CD14-positive monocyte (primary cell): ENCODE measurements at regions of chr18 and their contacts with region 1.

Region 1: DNA sequence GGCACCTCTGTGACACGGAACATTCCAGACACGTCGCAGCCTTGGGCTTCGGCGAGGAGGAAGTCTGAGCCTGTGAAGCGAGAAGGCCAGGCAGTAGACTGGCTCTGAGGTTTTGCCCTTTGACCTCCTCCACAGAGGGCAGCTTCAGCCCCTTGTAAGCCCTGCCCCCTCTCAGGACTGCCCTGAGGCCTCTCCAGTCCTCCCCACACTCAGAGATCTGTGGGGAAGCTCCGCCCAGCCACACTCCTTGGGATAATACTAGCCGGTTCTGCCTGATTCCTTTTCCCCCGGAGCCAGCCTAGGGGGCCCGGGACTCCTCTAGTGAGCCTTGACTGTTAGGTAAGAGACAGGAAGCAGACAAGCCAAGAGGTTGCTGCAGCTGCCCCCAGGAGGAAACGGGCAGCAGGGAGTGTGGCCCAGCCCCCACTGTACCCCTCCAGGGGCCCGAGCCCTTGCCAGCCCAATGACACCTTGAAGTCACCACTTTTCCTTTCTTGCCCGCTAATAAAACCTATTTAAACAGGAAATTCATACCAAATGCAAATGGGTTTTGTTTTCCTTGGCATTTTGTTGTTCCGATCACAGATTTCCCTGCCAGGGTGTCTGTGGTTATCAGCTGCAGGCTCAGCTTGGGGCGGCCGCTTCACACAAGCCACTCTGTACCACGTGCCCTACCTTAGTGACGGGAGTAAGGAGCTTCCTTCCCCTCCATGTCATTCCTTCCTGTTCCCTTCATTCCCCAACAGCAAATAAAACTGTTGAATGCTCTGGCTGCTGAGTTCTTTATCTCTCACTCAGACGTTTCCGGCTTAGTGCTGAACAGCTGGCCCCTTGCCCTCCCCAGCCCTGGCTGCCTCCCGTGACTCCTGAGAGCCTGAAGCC is 124.7 kb downstream of the CABLES1 start:
- DNase-seq: peak; percentile 64 to 80 (median 70)
- H3K4me3 ChIP-seq: peak overlapping the region in 1 of 3 experiments; percentile 46
- H3K4me3 Mint-ChIP-seq: peak overlapping the region; percentile 50 to 86
- H3K27ac ChIP-seq: peak overlapping the region in 1 of 2 donors; percentile 3
- H3K27ac Mint-ChIP-seq: peak overlapping the region; percentile 28 to 92 (median 80)
- H3K4me1 ChIP-seq: peaks cover 32 to 36% of the 10 kb centered on the region in 2 donors
- H3K4me1 Mint-ChIP-seq: peaks cover 37% of the 10 kb centered on the region
- H3K27me3 ChIP-seq: no peaks in the 10 kb centered on the region
- H3K27me3 Mint-ChIP-seq: peaks cover 0 to 19% (median 6%) of the 10 kb centered on the region in 3 donors
- CTCF ChIP-seq: no peak

Region 2: GRCh38 chr18:23422672-23423418 is 162.9 kb after region 1 on chr18:
- intact Hi-C with region 1: loop called in 1 of 2 experiments (anchors 10 kb)
- DNase-seq: peak; percentile 94 to 98 (median 97)
- H3K4me3 ChIP-seq: peak overlapping the region in 1 of 3 experiments; percentile 7
- H3K4me3 Mint-ChIP-seq: peak overlapping the region; percentile 13 to 72
- H3K27ac ChIP-seq: peak overlapping the region; percentile 34 to 76
- H3K27ac Mint-ChIP-seq: peak overlapping the region; percentile 93 to 99 (median 96)
- H3K4me1 ChIP-seq: peaks cover 23 to 24% of the 10 kb centered on the region in 2 donors
- H3K4me1 Mint-ChIP-seq: peaks cover 28% of the 10 kb centered on the region
- H3K27me3 ChIP-seq: no peaks in the 10 kb centered on the region
- H3K27me3 Mint-ChIP-seq: no peaks in the 10 kb centered on the region
- CTCF ChIP-seq: no peak